ENCODE measurements at regions of chrX and their contacts with region 1.

Region 1: DNA sequence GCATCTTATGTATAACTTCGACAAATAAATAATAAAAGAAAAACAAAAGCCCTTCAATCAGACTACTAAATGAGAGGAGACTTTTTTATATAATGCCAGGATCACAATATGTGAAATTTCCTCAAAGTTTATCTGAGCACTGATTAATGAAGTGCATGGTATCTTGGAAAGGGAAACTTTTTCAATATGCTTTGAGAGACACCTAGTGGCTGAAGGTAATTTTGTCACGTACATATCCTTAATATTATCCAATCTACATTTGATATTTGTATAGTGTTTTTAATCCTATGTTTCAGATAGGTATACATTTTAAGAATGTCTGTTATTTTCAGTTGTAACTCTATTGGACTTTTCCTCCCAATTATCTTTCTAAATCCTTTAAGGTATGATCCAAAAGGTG is 146.8 kb downstream of the KLHL4 start:
- DNase-seq: no peak
- H3K4me3 ChIP-seq: no peak overlapping the region
- H3K27ac ChIP-seq: no peak overlapping the region
- H3K4me1 ChIP-seq: no peaks in the 10 kb centered on the region
- H3K27me3 ChIP-seq: no peaks in the 10 kb centered on the region
- CTCF ChIP-seq: peak; percentile 62

Region 2: DNA sequence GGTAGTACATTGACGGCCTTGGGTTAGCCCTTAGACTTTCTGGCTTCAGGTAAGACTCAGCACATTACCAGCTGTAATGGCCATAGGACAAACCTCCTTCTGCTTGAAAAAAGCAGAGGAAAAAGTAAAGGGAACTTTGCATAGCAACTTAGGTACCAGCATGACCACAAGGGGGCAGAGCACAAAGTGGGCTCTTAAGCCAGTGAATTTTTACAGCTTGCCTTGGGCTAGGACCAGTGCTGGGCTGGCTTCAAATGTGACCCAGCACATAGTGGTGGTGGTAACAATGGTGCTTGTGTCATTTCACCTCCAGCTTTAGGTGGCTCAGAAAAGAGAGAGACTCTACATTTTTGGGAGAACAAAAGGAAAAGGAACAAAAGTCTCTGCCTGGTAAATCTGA is 80.7 kb before region 1 on chrX:
- CTCF ChIA-PET with region 1: no interaction called
- POLR2A ChIA-PET with region 1: no interaction called
- intact Hi-C with region 1: loop called (anchors 5 kb)
- DNase-seq: peak in 1 of 2 experiments; percentile 2
- H3K4me3 ChIP-seq: no peak overlapping the region
- H3K27ac ChIP-seq: no peak overlapping the region
- H3K4me1 ChIP-seq: no peaks in the 10 kb centered on the region
- H3K27me3 ChIP-seq: no peaks in the 10 kb centered on the region
- CTCF ChIP-seq: peak; percentile 65

Region 3: GRCh38 chrX:87679849-87680248 is 15.5 kb after region 1 on chrX:
- CTCF ChIA-PET with region 1: no interaction called
- POLR2A ChIA-PET with region 1: no interaction called
- intact Hi-C with region 1: no loop called
- DNase-seq: no peak
- H3K4me3 ChIP-seq: no peak overlapping the region
- H3K27ac ChIP-seq: no peak overlapping the region
- H3K4me1 ChIP-seq: no peaks in the 10 kb centered on the region
- H3K27me3 ChIP-seq: no peaks in the 10 kb centered on the region
- CTCF ChIP-seq: no peak